ENCODE measurements at regions of chr10 and their contacts with region 1.

Region 1: DNA sequence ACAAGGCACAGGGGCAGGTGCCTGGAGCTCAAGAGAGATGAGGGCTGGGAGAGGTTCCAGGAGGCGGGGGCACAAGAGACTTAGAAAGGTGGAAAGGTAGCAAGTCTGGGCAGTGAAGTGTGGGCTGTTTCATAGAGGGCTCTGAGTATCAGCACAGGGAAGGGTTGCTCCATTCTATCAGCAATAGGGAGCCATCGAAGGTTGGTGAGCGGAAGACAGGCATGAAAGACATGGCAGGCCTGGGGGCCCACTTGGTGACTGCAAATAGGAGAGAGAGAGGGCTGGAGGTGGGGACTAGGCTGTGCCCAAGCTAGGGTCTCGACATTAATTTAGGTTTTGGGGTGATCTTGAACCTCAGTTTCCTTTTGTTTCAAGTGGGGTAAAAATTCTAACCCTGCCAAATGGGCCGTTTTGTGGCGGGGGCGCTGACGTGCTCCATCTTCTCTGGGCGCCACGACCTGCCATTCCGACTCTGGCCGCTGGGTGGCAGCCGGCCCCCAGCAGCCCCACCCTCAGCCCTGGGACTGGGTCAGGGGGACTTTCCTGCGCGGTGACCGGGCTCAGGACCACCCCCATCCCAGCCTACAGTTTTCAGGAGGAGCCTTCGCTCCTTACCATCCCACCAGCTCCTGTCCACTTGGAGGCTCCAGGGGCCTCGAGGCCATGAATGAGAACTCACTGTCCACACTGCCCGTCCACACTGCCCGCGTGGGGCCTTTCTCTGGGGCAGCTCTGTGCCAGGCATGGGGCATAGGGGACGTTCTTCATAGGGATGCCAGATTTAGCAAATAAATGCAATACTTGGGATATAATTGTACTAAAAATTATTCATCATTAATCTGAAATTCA is 37.2 kb upstream of the PCBD1 start:
- DNase-seq: peak in 1 of 2 experiments; percentile 49
- ATAC-seq: peak; percentile 76 to 92
- H3K4me3 ChIP-seq: no peak overlapping the region
- H3K27ac ChIP-seq: no peak overlapping the region
- H3K4me1 ChIP-seq: no peaks in the 10 kb centered on the region
- CTCF ChIP-seq: peak; percentile 90
- EP300 ChIP-seq: no peak
- POLR2A ChIP-seq: no peak
- RAD21 ChIP-seq: peak; percentile 82 to 91

Region 2: GRCh38 chr10:70191972-70192305 is 733.7 kb before region 1 on chr10:
- CTCF ChIA-PET with region 1: no interaction called
- POLR2A ChIA-PET with region 1: no interaction called
- DNase-seq: no peak
- ATAC-seq: peak; percentile 64 to 68; a peak in 5 of 6 replicates
- H3K4me3 ChIP-seq: no peak overlapping the region
- H3K27ac ChIP-seq: peak overlapping the region in 1 of 2 experiments; percentile 45; a peak in 2 of 6 replicates
- H3K4me1 ChIP-seq: peaks cover 20% of the 10 kb centered on the region
- CTCF ChIP-seq: no peak
- EP300 ChIP-seq: peak in 1 of 2 experiments; percentile 15; a peak in 1 of 5 replicates
- POLR2A ChIP-seq: no peak
- RAD21 ChIP-seq: no peak

Region 3: GRCh38 chr10:70903262-70903921 is 22.2 kb before region 1 on chr10:
- CTCF ChIA-PET with region 1: interaction called, 104 read pairs
- POLR2A ChIA-PET with region 1: no interaction called
- DNase-seq: peak; percentile 59 to 62
- ATAC-seq: peak; percentile 51 to 77
- H3K4me3 ChIP-seq: no peak overlapping the region
- H3K27ac ChIP-seq: no peak overlapping the region
- H3K4me1 ChIP-seq: 0 out of 3 replicates have a peak, but pooled peaks cover 3% of the 10 kb centered on the region
- CTCF ChIP-seq: peak; percentile 75
- EP300 ChIP-seq: no peak
- POLR2A ChIP-seq: no peak
- RAD21 ChIP-seq: peak; percentile 83 to 93

Region 4: GRCh38 chr10:70956029-70956759 is 30.6 kb after region 1 on chr10:
- CTCF ChIA-PET with region 1: interaction called, 14 read pairs
- POLR2A ChIA-PET with region 1: no interaction called
- DNase-seq: peak; percentile 19 to 44
- ATAC-seq: peak; percentile 68 to 93; a peak in 4 of 6 replicates
- H3K4me3 ChIP-seq: no peak overlapping the region
- H3K27ac ChIP-seq: no peak overlapping the region
- H3K4me1 ChIP-seq: no peaks in the 10 kb centered on the region
- CTCF ChIP-seq: no peak
- EP300 ChIP-seq: no peak
- POLR2A ChIP-seq: no peak
- RAD21 ChIP-seq: peak in 1 of 2 experiments; percentile 24; a peak in 1 of 5 replicates

Region 5: GRCh38 chr10:71176661-71177060 is 251.1 kb after region 1 on chr10:
- CTCF ChIA-PET with region 1: interaction called, 19 read pairs
- POLR2A ChIA-PET with region 1: no interaction called
- DNase-seq: no peak
- ATAC-seq: no peak
- H3K4me3 ChIP-seq: no peak overlapping the region
- H3K27ac ChIP-seq: no peak overlapping the region
- H3K4me1 ChIP-seq: no peaks in the 10 kb centered on the region
- CTCF ChIP-seq: no peak
- EP300 ChIP-seq: no peak
- POLR2A ChIP-seq: no peak
- RAD21 ChIP-seq: no peak

Region 6: GRCh38 chr10:71236286-71236685 is 310.7 kb after region 1 on chr10:
- CTCF ChIA-PET with region 1: interaction called, 14 read pairs
- POLR2A ChIA-PET with region 1: no interaction called
- DNase-seq: no peak
- ATAC-seq: no peak
- H3K4me3 ChIP-seq: no peak overlapping the region
- H3K27ac ChIP-seq: no peak overlapping the region
- H3K4me1 ChIP-seq: no peaks in the 10 kb centered on the region
- CTCF ChIP-seq: no peak
- EP300 ChIP-seq: no peak
- POLR2A ChIP-seq: no peak
- RAD21 ChIP-seq: no peak

Region 7: DNA sequence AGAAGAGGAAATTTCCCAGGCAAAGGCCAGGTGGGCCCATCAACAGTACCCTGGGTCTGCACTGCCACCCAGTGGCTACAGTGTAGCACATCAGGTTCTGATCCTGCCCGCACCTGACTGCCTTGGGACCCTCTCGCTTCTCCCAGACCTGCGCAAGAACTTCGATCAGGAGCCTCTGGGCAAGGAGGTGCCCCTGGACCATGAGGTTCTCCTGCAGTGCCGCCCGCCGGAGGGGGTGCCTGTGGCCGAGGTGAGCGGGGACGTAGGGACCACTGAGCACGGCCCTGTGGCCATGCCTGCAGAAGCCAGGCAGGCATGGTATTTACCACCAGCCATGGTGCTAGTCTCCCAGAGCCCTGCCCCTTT is 359.6 kb after region 1 on chr10:
- CTCF ChIA-PET with region 1: interaction called, 74 read pairs
- POLR2A ChIA-PET with region 1: no interaction called
- DNase-seq: peak; percentile 39 to 68
- ATAC-seq: peak; percentile 75 to 92
- H3K4me3 ChIP-seq: no peak overlapping the region
- H3K27ac ChIP-seq: no peak overlapping the region
- H3K4me1 ChIP-seq: no peaks in the 10 kb centered on the region
- CTCF ChIP-seq: peak; percentile 81
- EP300 ChIP-seq: no peak
- POLR2A ChIP-seq: no peak
- RAD21 ChIP-seq: peak; percentile 82 to 86